ENCODE measurements at regions of chr22 and their contacts with region 1.

Region 1: DNA sequence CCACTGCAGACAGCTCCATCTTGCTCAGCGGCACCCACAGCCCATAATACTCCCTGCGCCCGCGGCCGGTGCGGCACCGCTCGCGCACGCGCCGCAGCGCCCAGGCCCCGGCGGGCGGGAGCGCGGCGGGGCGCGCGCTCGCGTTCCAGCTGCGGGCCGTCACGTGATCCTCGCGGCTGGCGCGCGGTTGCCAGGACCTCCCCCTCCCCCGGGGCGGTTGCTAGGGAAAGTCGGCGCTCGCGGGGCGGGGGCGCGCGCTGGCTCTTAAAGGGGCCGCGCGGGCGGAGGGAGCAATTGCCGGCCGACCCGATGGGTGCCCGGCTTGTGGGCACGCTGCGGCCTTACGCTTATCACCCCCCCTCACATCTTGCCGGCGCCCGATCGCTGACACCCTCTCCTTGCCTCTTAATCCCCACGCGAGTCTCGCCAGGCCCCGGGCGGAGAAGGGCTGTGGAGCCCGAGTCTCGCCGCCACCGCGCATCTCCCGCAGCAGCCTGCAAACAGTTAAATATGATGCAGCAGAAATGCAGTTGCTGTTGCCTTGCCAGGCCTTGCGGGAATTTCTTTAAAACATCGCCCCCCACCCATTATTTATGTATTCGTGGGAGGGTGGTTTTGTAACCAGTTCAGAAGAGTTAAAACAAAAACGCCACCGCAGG is at the start of gene CBX6:
- DNase-seq: peak; percentile 97
- ATAC-seq: peak; percentile 76
- H3K4me3 ChIP-seq: peak within 1 kb of the TSS; percentile 65 to 93 (median 75)
- H3K4me3 Mint-ChIP-seq: peak within 1 kb of the TSS; percentile 94
- H3K27ac ChIP-seq: peak within 1 kb of the TSS; percentile 42 to 54
- H3K27ac Mint-ChIP-seq: peak within 1 kb of the TSS; percentile 92
- H3K4me1 ChIP-seq: peaks cover 31 to 49% of the 10 kb centered on the region in 2 donors
- H3K4me1 Mint-ChIP-seq: peaks cover 49% of the 10 kb centered on the region
- H3K27me3 ChIP-seq: peaks cover 0 to 23% (median 8%) of the 10 kb centered on the region in 4 experiments
- H3K27me3 Mint-ChIP-seq: peaks cover 19% of the 10 kb centered on the region
- CTCF ChIP-seq: no peak
- total RNA-seq, gene CBX6: 55.1 and 57.6 TPM in 2 replicates

Region 2: DNA sequence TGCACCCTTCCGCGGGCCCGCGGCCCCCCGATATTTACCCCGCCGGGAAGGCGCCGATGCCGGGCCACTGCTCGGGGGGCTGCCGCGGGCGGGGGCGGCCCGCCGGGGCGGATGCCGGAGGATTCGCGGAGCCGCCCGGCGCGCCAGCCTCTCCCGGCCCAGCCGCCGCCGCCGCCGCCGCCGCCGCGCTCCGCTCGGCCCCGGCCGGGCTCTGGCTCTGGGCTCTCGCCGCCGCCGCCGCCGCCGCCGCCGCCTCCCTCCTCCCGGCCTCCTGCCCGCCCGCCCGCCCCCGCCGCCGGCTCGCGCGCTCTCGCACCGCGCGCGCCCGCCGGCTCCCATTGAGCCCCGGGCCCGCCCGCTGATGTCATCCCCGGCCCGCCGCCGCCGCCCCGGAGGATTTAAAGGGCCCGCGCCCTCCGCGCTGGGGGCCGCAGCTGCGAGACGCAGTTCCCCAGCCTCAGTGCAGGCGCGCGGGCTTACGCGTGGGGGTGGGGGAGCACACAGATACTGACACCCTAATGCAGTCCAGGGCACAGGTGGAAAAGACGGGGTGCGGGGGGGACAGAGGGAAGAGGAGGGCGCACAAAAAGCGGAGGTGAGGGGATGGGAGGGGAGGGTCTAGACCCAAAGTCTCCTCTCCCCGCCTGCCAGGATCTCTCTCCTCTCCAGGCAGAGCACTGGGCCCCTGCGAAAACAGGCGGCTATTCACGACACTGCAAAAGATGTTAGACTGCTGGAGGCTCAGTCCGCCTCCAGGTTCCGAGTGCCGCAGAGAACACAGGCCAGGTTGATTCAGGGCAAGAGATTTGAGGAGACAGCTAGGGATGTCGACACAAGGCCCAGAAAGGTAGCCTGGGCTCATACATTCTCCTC is 554.9 kb before region 1 on chr22 and contains the start of gene CSNK1E:
- CTCF ChIA-PET with region 1: no interaction called
- POLR2A ChIA-PET with region 1: no interaction called
- intact Hi-C with region 1: loop called (anchors 2 kb)
- DNase-seq: peak; percentile 84
- ATAC-seq: peak; percentile 61
- H3K4me3 ChIP-seq: peak within 1 kb of the TSS; percentile 3 to 71 (median 58)
- H3K4me3 Mint-ChIP-seq: peak within 1 kb of the TSS; percentile 92
- H3K27ac ChIP-seq: peak within 1 kb of the TSS; percentile 82 to 91
- H3K27ac Mint-ChIP-seq: peak within 1 kb of the TSS; percentile 97
- H3K4me1 ChIP-seq: peaks cover 40 to 51% of the 10 kb centered on the region in 2 donors
- H3K4me1 Mint-ChIP-seq: peaks cover 49% of the 10 kb centered on the region
- H3K27me3 ChIP-seq: no peaks in the 10 kb centered on the region
- H3K27me3 Mint-ChIP-seq: no peaks in the 10 kb centered on the region
- CTCF ChIP-seq: no peak
- total RNA-seq, gene CSNK1E: 133 and 136 TPM in 2 replicates

Region 3: GRCh38 chr22:38755911-38756532 is 116.3 kb before region 1 on chr22 and contains the start of gene SUN2:
- CTCF ChIA-PET with region 1: interaction called, 5 read pairs
- POLR2A ChIA-PET with region 1: no interaction called
- intact Hi-C with region 1: loop called (anchors 10 kb)
- DNase-seq: peak; percentile 94
- ATAC-seq: peak; percentile 74
- H3K4me3 ChIP-seq: peak within 1 kb of the TSS; percentile 59 to 97 (median 82)
- H3K4me3 Mint-ChIP-seq: peak within 1 kb of the TSS; percentile 100
- H3K27ac ChIP-seq: peak within 1 kb of the TSS; percentile 71 to 81
- H3K27ac Mint-ChIP-seq: peak within 1 kb of the TSS; percentile 99
- H3K4me1 ChIP-seq: peaks cover 63 to 82% of the 10 kb centered on the region in 2 donors
- H3K4me1 Mint-ChIP-seq: peaks cover 65% of the 10 kb centered on the region
- H3K27me3 ChIP-seq: no peaks in the 10 kb centered on the region
- H3K27me3 Mint-ChIP-seq: no peaks in the 10 kb centered on the region
- CTCF ChIP-seq: no peak
- total RNA-seq, gene SUN2: 305 and 322 TPM in 2 replicates

Region 4: DNA sequence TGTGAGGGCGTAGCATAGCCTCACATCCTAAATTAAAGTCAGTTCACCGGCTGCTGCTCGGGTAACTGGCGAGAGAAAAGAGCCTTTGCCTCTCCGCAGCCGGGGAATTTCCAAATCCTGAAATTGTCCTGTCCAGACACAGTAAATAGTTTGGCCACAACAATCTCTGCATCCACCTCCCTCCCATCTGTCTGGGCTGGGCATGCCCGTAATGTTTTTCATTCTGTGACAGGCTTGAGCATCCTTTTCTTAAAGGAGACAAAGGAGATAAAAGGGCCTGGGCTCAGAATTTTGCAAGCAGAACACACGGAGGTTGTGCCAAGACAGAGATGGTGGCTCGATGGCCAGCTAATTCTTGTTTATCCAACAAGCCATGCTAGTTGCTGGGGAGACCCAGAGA is 19.0 kb after region 1 on chr22:
- CTCF ChIA-PET with region 1: no interaction called
- POLR2A ChIA-PET with region 1: no interaction called
- intact Hi-C with region 1: no loop called
- DNase-seq: no peak
- ATAC-seq: no peak
- H3K4me3 ChIP-seq: no peak overlapping the region
- H3K4me3 Mint-ChIP-seq: no peak overlapping the region
- H3K27ac ChIP-seq: no peak overlapping the region
- H3K27ac Mint-ChIP-seq: no peak overlapping the region
- H3K4me1 ChIP-seq: no peaks in the 10 kb centered on the region
- H3K4me1 Mint-ChIP-seq: no peaks in the 10 kb centered on the region
- H3K27me3 ChIP-seq: peaks cover 0 to 8% (median 5%) of the 10 kb centered on the region in 4 experiments
- H3K27me3 Mint-ChIP-seq: peaks cover 49% of the 10 kb centered on the region
- CTCF ChIP-seq: no peak

Region 5: DNA sequence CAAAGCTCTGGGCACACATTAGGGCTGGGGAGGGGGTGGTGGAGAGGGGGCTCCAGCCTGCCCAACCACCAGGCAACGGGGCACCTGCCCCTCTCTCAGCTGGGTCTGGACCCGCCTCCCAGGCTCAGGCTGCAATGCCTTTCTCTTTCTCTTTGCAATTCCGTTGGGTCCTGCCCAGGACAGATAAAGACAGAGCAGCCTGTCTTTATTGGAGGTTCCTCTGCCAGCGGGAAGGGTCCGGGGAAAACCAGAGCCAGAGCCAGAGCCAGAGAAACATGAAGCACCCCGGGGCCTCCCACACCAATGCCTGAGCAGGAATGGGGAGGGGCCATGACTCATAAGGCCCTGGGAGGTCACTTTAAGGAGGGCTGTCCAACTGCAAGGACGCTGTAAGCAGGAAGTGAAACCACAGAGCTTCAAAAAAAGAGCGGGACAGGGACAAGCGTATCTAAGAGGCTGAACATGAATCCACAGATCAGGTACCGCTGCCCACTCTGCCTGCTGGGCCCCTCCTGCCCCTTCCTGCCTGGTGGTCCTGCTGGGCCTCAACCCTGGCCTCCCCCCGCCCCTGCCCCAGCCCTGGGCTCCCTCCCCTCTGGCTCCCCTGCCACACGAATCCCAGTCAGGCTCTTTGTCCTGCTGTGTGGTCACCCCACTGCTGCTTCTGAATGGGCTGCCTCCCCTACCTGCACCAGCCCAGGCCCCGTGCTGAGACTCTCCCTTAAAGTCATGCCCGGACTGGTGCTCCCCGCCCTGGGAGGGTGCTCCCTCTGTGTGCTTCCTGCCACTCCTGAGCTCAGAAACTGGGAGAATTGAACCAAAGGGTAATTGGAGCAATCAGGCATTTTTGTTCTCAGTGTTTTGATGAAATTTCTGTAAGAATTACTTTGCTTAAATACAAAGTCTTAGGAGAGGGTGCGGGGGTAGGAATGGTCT is 110.0 kb after region 1 on chr22 and contains the start of gene APOBEC3B:
- CTCF ChIA-PET with region 1: interaction called, 7 read pairs
- POLR2A ChIA-PET with region 1: no interaction called
- intact Hi-C with region 1: loop called (anchors 5 kb)
- DNase-seq: peak; percentile 85
- ATAC-seq: peak; percentile 75
- H3K4me3 ChIP-seq: peak within 1 kb of the TSS in 4 of 5 experiments; percentile 43 to 74 (median 58)
- H3K4me3 Mint-ChIP-seq: peak within 1 kb of the TSS; percentile 97
- H3K27ac ChIP-seq: peak within 1 kb of the TSS in 1 of 2 donors; percentile 57
- H3K27ac Mint-ChIP-seq: peak within 1 kb of the TSS; percentile 92
- H3K4me1 ChIP-seq: peaks cover 11 to 39% of the 10 kb centered on the region in 2 donors
- H3K4me1 Mint-ChIP-seq: peaks cover 44% of the 10 kb centered on the region
- H3K27me3 ChIP-seq: no peaks in the 10 kb centered on the region
- H3K27me3 Mint-ChIP-seq: peaks cover under 1% of the 10 kb centered on the region
- CTCF ChIP-seq: no peak
- total RNA-seq, gene APOBEC3B: 7.9 and 9.8 TPM in 2 replicates

Region 6: DNA sequence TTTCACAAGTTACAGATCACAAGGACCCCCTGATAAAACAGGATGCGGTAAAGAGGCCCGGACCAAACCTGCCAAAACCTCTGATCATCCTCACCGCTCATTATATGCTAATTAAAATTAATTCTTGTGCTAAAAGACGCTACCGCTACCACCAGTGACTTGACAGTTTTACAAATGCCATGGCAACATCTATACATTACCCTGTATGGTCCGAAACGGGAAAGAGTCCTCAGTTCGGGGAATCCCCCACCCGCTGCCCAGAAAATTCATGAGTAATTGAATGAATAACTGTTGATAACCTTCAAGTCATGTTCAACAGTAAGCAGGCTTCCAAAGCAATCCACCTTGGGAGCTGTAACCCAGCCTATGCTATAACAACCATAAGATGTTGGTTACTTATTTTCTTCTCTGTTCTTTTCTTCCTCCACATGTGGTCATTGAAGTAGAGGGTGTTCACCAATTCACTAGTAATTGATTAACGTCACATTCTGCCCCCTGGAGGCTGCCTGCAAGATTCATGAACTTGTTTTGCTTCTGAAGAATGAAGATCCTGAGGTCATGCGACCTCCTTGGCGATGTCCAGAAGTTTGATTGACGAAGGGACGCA is 245.4 kb after region 1 on chr22:
- CTCF ChIA-PET with region 1: interaction called, 22 read pairs
- POLR2A ChIA-PET with region 1: no interaction called
- intact Hi-C with region 1: loop called (anchors 1 kb)
- DNase-seq: peak; percentile 83
- ATAC-seq: peak; percentile 56
- H3K4me3 ChIP-seq: no peak overlapping the region
- H3K4me3 Mint-ChIP-seq: peak overlapping the region; percentile 61
- H3K27ac ChIP-seq: peak overlapping the region; percentile 1 to 11
- H3K27ac Mint-ChIP-seq: peak overlapping the region; percentile 68
- H3K4me1 ChIP-seq: peaks cover 40 to 43% of the 10 kb centered on the region in 2 donors
- H3K4me1 Mint-ChIP-seq: peaks cover 46% of the 10 kb centered on the region
- H3K27me3 ChIP-seq: no peaks in the 10 kb centered on the region
- H3K27me3 Mint-ChIP-seq: no peaks in the 10 kb centered on the region
- CTCF ChIP-seq: peak; percentile 78

Region 7: GRCh38 chr22:39306581-39307361 is 434.5 kb after region 1 on chr22:
- CTCF ChIA-PET with region 1: interaction called, 10 read pairs
- POLR2A ChIA-PET with region 1: no interaction called
- intact Hi-C with region 1: loop called (anchors 1 kb)
- DNase-seq: peak; percentile 54
- ATAC-seq: no peak
- H3K4me3 ChIP-seq: no peak overlapping the region
- H3K4me3 Mint-ChIP-seq: no peak overlapping the region
- H3K27ac ChIP-seq: no peak overlapping the region
- H3K27ac Mint-ChIP-seq: no peak overlapping the region
- H3K4me1 ChIP-seq: peaks cover 0 to 18% of the 10 kb centered on the region in 2 donors
- H3K4me1 Mint-ChIP-seq: peaks cover 15% of the 10 kb centered on the region
- H3K27me3 ChIP-seq: no peaks in the 10 kb centered on the region
- H3K27me3 Mint-ChIP-seq: no peaks in the 10 kb centered on the region
- CTCF ChIP-seq: peak; percentile 28

Region 8: DNA sequence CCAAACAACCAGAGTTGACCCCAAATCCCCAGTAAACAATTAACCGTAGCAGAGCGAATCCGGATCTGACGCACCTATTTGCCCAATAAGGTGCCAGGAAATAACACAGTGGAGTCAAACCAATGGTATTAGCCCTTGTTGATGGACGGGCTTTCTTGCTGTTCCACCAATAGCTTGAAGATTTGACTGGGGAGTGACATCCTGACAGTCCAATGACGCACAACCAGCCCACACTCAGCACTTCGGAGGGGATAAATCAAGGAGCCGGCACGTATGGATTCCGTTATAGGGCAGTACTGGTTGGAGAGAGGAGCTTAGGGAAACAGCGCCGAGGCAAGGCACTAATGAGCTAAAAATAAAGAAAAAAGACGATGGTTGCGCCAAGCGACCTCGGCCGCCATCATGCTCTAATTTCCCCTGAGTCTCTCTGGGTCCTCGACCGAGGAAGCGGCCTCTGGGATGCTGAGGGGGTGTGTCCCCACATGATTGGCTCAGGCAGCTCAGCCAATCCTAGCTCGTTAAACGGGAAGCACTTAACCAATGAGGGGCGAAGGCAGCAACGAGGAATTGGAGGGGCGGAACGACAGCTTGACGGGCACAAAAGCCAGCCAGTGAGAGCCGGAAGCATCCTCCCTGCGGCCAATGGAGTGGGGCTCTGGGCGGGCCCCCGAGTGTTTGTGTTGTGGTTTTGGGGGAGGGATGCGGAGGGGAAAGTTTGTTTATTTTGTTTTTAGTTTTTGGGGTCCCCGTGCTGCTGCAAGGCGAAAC is 1172.0 kb after region 1 on chr22:
- CTCF ChIA-PET with region 1: no interaction called
- POLR2A ChIA-PET with region 1: no interaction called
- intact Hi-C with region 1: loop called (anchors 2 kb)
- DNase-seq: peak; percentile 99
- ATAC-seq: peak; percentile 84
- H3K4me3 ChIP-seq: peak overlapping the region; percentile 65 to 98 (median 97)
- H3K4me3 Mint-ChIP-seq: peak overlapping the region; percentile 95
- H3K27ac ChIP-seq: peak overlapping the region; percentile 97 to 100
- H3K27ac Mint-ChIP-seq: peak overlapping the region; percentile 99
- H3K4me1 ChIP-seq: peaks cover 39 to 43% of the 10 kb centered on the region in 2 donors
- H3K4me1 Mint-ChIP-seq: peaks cover 40% of the 10 kb centered on the region
- H3K27me3 ChIP-seq: peaks cover 0 to 14% (median 2%) of the 10 kb centered on the region in 4 experiments
- H3K27me3 Mint-ChIP-seq: peaks cover 7% of the 10 kb centered on the region
- CTCF ChIP-seq: no peak